Breast epithelium (tissue), 4 donors: ENCODE measurements at regions of chr1 and their contacts with region 1.

Region 1: GRCh38 chr1:71676979-71677930 is 596.4 kb upstream of the ZRANB2 start:
- DNase-seq: no peak
- H3K4me3 ChIP-seq: no peak overlapping the region
- H3K27ac ChIP-seq: no peak overlapping the region
- H3K4me1 ChIP-seq: no peaks in the 10 kb centered on the region
- H3K27me3 ChIP-seq: no peaks in the 10 kb centered on the region
- CTCF ChIP-seq: no peak
- POLR2A ChIP-seq: no peak

Region 2: DNA sequence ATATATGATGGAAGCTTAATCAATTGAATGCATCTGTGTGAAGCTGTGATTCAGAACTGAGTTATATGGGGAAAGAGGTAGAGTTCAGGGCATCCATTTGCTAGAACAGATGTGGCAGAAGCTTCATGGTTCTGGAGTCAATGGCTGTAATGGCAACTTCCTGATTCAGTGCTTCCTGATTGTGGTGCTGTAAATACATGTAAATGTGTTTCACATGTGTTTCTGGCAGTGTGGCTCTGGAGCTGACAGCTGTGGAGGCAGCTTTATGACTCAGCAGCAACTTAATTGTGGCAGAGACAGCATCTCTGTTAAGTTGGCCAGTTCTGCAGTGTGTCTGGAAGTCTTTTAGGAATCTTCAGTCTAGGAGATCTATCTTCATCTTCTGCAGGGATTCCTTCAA is 369.8 kb before region 1 on chr1:
- intact Hi-C with region 1: loop called (anchors 5 kb)
- DNase-seq: no peak
- H3K4me3 ChIP-seq: no peak overlapping the region
- H3K27ac ChIP-seq: no peak overlapping the region
- H3K4me1 ChIP-seq: no peaks in the 10 kb centered on the region
- H3K27me3 ChIP-seq: no peaks in the 10 kb centered on the region
- CTCF ChIP-seq: no peak
- POLR2A ChIP-seq: no peak

Region 3: DNA sequence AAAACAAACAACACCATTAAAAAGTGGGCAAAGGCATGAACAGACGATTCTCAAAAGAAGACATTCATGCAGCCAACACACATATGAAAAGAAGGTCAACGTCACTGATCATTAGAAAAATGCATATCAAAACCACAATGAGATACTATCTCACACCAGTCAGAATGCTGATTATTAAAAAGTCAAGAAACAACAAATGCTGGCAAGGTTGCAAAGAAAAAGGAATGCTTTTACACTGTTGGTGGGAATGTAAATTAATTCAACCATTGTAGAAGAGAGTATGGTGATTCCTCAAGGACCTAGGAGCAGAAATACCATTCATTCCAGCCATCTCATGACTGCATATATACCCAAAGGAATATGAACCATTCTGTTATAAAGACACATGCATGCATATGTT is 185.5 kb after region 1 on chr1:
- intact Hi-C with region 1: no loop called
- DNase-seq: no peak
- H3K4me3 ChIP-seq: no peak overlapping the region
- H3K27ac ChIP-seq: no peak overlapping the region
- H3K4me1 ChIP-seq: no peaks in the 10 kb centered on the region
- H3K27me3 ChIP-seq: no peaks in the 10 kb centered on the region
- CTCF ChIP-seq: no peak
- POLR2A ChIP-seq: no peak